ENCODE measurements at regions of chr11 and their contacts with region 1.

Region 1: GRCh38 chr11:117327567-117328374 is at the start of gene CEP164:
- DNase-seq: peak; percentile 76 to 95 (median 93)
- ATAC-seq: peak; percentile 96
- H3K4me3 ChIP-seq: peak within 1 kb of the TSS; percentile 66
- H3K4me3 Mint-ChIP-seq: peak within 1 kb of the TSS in 8 of 10 donors; percentile 26 to 69 (median 44)
- H3K27ac ChIP-seq: peak within 1 kb of the TSS; percentile 79
- H3K27ac Mint-ChIP-seq: peak within 1 kb of the TSS in 4 of 9 donors; percentile 11 to 81 (median 68)
- H3K4me1 ChIP-seq: peaks cover 0 to 10% of the 10 kb centered on the region in 2 donors
- H3K4me1 Mint-ChIP-seq: peaks cover 0 to 19% (median 14%) of the 10 kb centered on the region in 7 donors
- H3K27me3 ChIP-seq: no peaks in the 10 kb centered on the region
- H3K27me3 Mint-ChIP-seq: peaks cover 0 to 4% (median 0%) of the 10 kb centered on the region in 5 donors
- total RNA-seq, gene CEP164: 36.6 to 47.6 (median 36.8) TPM

Region 2: DNA sequence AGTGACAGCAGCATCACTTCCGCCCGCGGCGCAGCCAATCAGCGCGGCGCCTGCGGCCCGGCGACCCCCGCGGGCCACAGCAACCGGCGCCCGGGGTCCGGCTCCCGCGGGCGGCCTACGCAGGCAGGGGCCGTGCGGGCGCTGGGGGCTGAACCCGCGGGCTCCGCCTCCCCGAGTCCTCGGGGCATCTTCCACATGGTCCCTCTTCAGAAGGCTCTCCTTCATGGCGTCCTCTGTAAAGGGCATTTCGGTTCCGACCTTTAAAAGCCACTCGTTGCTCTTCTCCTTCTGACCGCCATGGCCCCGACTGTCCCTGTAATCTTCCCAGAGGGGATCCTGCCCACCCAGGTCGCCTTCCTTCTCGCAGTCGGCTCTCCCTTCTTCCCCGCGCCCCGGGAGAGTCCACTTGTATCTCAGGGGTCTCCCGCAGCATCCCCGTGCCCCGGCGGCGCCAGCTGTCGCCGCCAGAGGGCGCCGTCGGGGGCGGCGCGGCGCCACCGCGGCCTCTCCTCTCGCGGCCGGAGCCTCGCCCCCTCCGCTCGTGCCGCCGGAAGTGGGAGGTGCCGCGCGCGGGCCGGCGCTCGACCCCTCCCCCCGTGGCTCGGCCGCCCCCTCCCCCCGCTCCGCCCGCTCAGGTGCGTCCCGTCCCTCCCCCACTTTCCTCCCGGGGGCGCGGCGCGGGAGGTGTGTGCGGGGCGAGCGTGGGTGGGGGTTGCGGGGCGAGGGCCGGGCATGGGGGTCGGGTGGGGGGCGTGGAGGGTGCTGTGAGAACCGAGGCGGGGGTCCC is 95.5 kb before region 1 on chr11 and contains the start of gene RNF214:
- CTCF ChIA-PET with region 1: no interaction called
- POLR2A ChIA-PET with region 1: interaction called, 6 read pairs
- intact Hi-C with region 1: loop called (anchors 1 kb)
- DNase-seq: peak; percentile 61 to 84 (median 73)
- ATAC-seq: peak; percentile 92
- H3K4me3 ChIP-seq: peak within 1 kb of the TSS; percentile 96
- H3K4me3 Mint-ChIP-seq: peak within 1 kb of the TSS; percentile 91 to 100 (median 98)
- H3K27ac ChIP-seq: peak within 1 kb of the TSS; percentile 97
- H3K27ac Mint-ChIP-seq: peak within 1 kb of the TSS; percentile 94 to 100 (median 99)
- H3K4me1 ChIP-seq: peaks cover 32 to 35% of the 10 kb centered on the region in 2 donors
- H3K4me1 Mint-ChIP-seq: peaks cover 40 to 55% (median 50%) of the 10 kb centered on the region in 7 donors
- H3K27me3 ChIP-seq: no peaks in the 10 kb centered on the region
- H3K27me3 Mint-ChIP-seq: no peaks in the 10 kb centered on the region
- total RNA-seq, gene RNF214: 16.6 to 36.0 (median 24.0) TPM

Region 3: GRCh38 chr11:117290809-117291396 is 36.9 kb before region 1 on chr11 and contains the start of gene BACE1-AS:
- CTCF ChIA-PET with region 1: no interaction called
- POLR2A ChIA-PET with region 1: no interaction called
- intact Hi-C with region 1: no loop called
- DNase-seq: no peak
- ATAC-seq: no peak
- H3K4me3 ChIP-seq: no peak within 1 kb of the TSS
- H3K4me3 Mint-ChIP-seq: no peak within 1 kb of the TSS
- H3K27ac ChIP-seq: no peak within 1 kb of the TSS
- H3K27ac Mint-ChIP-seq: peak within 1 kb of the TSS in 3 of 9 donors; percentile 41 to 81 (median 67)
- H3K4me1 ChIP-seq: no peaks in the 10 kb centered on the region
- H3K4me1 Mint-ChIP-seq: peaks cover 0 to 6% (median 0%) of the 10 kb centered on the region in 7 donors
- H3K27me3 ChIP-seq: no peaks in the 10 kb centered on the region
- H3K27me3 Mint-ChIP-seq: no peaks in the 10 kb centered on the region
- total RNA-seq, gene BACE1-AS: 4.2 to 13.2 (median 7.7) TPM

Region 4: DNA sequence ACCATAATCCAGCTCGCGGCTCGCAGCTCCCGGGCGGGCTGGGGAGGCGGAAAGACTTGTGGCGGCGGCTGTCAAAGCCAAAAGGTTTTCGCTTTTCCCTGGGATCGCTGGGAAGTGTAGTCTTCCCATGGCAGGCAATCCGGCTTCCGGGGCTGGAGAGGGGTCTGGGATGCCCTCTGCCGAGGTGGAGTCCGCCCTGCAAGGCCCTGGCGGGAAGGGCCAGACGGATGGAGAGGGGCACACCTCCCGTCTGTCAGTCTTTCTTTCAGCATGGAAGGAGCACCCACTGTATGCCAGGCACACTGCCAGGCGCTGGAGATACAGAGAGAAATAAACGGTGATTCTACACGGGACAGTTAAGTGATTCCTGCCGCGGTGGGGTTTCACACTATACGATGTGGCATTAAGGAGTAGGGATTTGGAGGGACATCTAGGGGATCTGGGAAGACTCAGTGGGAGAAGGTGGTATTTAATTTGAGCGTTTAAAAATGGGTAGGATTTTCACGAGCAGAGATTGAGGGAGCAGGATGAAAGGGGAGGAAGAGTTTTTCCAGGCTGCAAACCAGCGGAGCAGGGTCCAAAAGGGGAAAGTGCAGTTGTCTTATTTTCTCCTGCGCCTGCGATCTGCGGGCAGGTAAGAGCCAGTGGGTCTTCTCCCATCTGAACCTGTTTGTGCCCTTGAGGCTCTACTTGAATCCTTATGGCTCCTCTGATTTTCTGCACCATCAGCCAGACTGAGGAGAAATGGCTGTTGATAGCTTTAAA is 11.4 kb before region 1 on chr11 and contains the start of gene BACE1:
- CTCF ChIA-PET with region 1: no interaction called
- POLR2A ChIA-PET with region 1: no interaction called
- intact Hi-C with region 1: loop called (anchors 1 kb)
- DNase-seq: peak in 2 of 9 donors; percentile 10 to 13
- ATAC-seq: peak; percentile 52
- H3K4me3 ChIP-seq: peak within 1 kb of the TSS; percentile 47
- H3K4me3 Mint-ChIP-seq: peak within 1 kb of the TSS; percentile 38 to 87 (median 76)
- H3K27ac ChIP-seq: no peak within 1 kb of the TSS
- H3K27ac Mint-ChIP-seq: peak within 1 kb of the TSS in 3 of 9 donors; percentile 5 to 74 (median 26)
- H3K4me1 ChIP-seq: peaks cover 7 to 9% of the 10 kb centered on the region in 2 donors
- H3K4me1 Mint-ChIP-seq: peaks cover 0 to 12% (median 6%) of the 10 kb centered on the region in 7 donors
- H3K27me3 ChIP-seq: peaks cover 0 to 7% of the 10 kb centered on the region in 2 donors
- H3K27me3 Mint-ChIP-seq: peaks cover 30 to 67% (median 37%) of the 10 kb centered on the region in 5 donors
- total RNA-seq, gene BACE1: 0.27 to 2.0 (median 0.34) TPM